ENCODE measurements at regions of chrX and their contacts with region 1.

Region 1: GRCh38 chrX:45479835-45480422 is 279.3 kb upstream of the DIPK2B start:
- DNase-seq: peak; percentile 92
- H3K4me3 Mint-ChIP-seq: no peak overlapping the region
- H3K27ac Mint-ChIP-seq: peak overlapping the region; percentile 98
- H3K4me1 Mint-ChIP-seq: peaks cover 12% of the 10 kb centered on the region
- H3K27me3 Mint-ChIP-seq: peaks cover 10% of the 10 kb centered on the region
- CTCF ChIP-seq: no peak

Region 2: DNA sequence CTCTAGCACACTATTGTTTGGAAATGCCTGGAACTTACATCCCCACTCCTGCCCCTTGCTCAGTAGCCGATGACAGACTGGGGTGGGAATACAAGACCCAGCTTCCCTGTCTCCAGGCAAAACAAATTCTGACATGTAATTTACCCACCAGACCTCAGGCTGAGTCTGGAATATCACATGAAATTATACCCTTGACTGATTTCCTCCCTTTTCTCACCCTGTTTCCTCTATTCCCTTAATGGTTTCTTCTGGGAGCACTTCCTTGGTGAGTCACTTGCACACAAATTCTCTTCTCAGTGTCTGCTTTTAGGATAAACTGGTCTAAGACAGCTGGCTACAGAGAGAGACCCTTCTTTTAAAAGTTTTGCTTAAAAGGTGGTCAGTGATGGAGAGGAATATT is 213.5 kb before region 1 on chrX:
- CTCF ChIA-PET with region 1: no interaction called
- POLR2A ChIA-PET with region 1: no interaction called
- intact Hi-C with region 1: no loop called
- DNase-seq: no peak
- H3K4me3 Mint-ChIP-seq: no peak overlapping the region
- H3K27ac Mint-ChIP-seq: no peak overlapping the region
- H3K4me1 Mint-ChIP-seq: no peaks in the 10 kb centered on the region
- H3K27me3 Mint-ChIP-seq: peaks cover 87% of the 10 kb centered on the region
- CTCF ChIP-seq: no peak

Region 3: DNA sequence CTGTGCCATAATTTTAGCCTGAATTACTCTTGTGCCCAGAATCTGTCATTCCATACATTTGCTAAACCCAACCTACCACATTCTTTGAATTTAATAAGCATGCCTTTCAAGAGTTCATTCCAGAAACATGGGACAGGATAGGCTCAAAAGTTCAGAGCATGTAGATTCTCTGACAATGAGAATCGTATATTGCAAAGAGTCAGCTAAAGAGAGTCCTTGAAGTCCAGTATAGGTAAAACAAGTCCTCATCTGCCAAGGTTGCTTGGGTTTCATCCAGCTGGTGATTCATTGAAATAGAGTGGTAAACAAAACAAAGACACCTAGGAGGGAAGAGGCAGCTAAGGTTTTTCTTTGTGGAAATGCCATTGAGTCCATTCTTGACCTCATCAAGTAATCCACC is 29.9 kb before region 1 on chrX:
- CTCF ChIA-PET with region 1: no interaction called
- POLR2A ChIA-PET with region 1: interaction called, 11 read pairs
- intact Hi-C with region 1: no loop called
- DNase-seq: peak; percentile 71
- H3K4me3 Mint-ChIP-seq: no peak overlapping the region
- H3K27ac Mint-ChIP-seq: no peak overlapping the region
- H3K4me1 Mint-ChIP-seq: peaks cover 16% of the 10 kb centered on the region
- H3K27me3 Mint-ChIP-seq: peaks cover 49% of the 10 kb centered on the region
- CTCF ChIP-seq: no peak

Region 4: DNA sequence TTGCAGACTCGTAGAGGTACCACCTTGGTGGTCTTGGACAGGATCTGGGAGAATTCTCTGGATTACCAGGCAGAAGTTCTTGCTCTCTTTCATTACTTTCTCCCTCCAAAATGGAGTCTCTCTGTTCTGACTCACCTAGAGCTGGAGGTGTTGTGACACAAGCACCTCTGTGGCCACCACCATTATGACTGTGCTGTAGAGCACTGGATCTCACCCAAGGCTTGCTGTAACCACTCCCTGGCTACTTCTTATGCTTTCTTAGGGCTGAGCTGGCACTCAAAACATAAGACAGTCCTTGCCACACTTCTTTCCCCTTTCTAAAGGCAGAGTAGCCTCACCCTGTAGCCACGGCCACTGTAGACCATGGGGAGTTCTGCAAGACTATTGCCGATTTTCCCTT is 17.4 kb after region 1 on chrX:
- CTCF ChIA-PET with region 1: no interaction called
- POLR2A ChIA-PET with region 1: interaction called, 18 read pairs
- intact Hi-C with region 1: no loop called
- DNase-seq: peak; percentile 85
- H3K4me3 Mint-ChIP-seq: no peak overlapping the region
- H3K27ac Mint-ChIP-seq: peak overlapping the region; percentile 64
- H3K4me1 Mint-ChIP-seq: peaks cover 15% of the 10 kb centered on the region
- H3K27me3 Mint-ChIP-seq: peaks cover 25% of the 10 kb centered on the region
- CTCF ChIP-seq: no peak

Region 5: GRCh38 chrX:45505214-45505613 is 25.3 kb after region 1 on chrX:
- CTCF ChIA-PET with region 1: no interaction called
- POLR2A ChIA-PET with region 1: interaction called, 30 read pairs
- intact Hi-C with region 1: loop called (anchors 1 kb)
- DNase-seq: peak; percentile 51
- H3K4me3 Mint-ChIP-seq: no peak overlapping the region
- H3K27ac Mint-ChIP-seq: peak overlapping the region; percentile 69
- H3K4me1 Mint-ChIP-seq: peaks cover 19% of the 10 kb centered on the region
- H3K27me3 Mint-ChIP-seq: peaks cover 11% of the 10 kb centered on the region
- CTCF ChIP-seq: no peak

Region 6: DNA sequence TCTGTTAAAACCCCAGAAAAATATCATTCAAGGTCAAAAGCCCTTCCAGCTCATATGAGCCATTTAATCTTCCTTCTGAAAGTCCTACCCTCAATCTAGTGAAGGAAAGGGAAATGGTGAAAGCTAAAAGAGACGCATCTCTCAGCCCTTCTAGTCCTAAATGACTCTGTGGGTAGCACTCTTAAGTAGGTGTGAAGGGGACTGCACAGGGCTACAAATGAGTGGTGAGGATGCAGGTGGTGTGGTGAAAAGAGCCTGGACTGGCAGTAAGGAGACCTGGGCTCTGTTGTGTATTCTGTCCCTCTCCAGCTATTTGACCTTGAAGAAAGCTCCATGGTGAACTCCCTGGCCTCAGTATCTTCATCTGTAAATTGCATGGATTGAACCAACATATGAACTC is 392.6 kb after region 1 on chrX:
- CTCF ChIA-PET with region 1: no interaction called
- POLR2A ChIA-PET with region 1: no interaction called
- intact Hi-C with region 1: no loop called
- DNase-seq: no peak
- H3K4me3 Mint-ChIP-seq: no peak overlapping the region
- H3K27ac Mint-ChIP-seq: no peak overlapping the region
- H3K4me1 Mint-ChIP-seq: no peaks in the 10 kb centered on the region
- H3K27me3 Mint-ChIP-seq: peaks cover 50% of the 10 kb centered on the region
- CTCF ChIP-seq: no peak